Right cardiac atrium (tissue), 5 donors: ENCODE measurements at regions of chrX and their contacts with region 1.

Region 1: GRCh38 chrX:136209016-136209738 is 42.0 kb downstream of the MAP7D3 start:
- DNase-seq: peak; percentile 68 to 84 (median 74)
- ATAC-seq: peak; percentile 58 to 60
- H3K4me3 ChIP-seq: no peak overlapping the region
- H3K27ac ChIP-seq: peak overlapping the region; percentile 90
- H3K4me1 ChIP-seq: peaks cover 2% of the 10 kb centered on the region
- H3K27me3 ChIP-seq: no peaks in the 10 kb centered on the region

Region 2: GRCh38 chrX:136168929-136169735 is 40.0 kb before region 1 on chrX:
- intact Hi-C with region 1: loop called in 3 of 4 experiments (anchors 5 kb)
- DNase-seq: peak; percentile 39 to 74 (median 68)
- ATAC-seq: peak; percentile 86
- H3K4me3 ChIP-seq: no peak overlapping the region
- H3K27ac ChIP-seq: peak overlapping the region; percentile 97
- H3K4me1 ChIP-seq: peaks cover 8% of the 10 kb centered on the region
- H3K27me3 ChIP-seq: no peaks in the 10 kb centered on the region